CD4-positive, alpha-beta memory T cell (primary cell): ENCODE measurements at regions of chr22 and their contacts with region 1.

Region 1: GRCh38 chr22:42079319-42080251 is at the start of gene SMDT1:
- DNase-seq: peak; percentile 98 to 99 (median 99)
- H3K4me3 ChIP-seq: peak within 1 kb of the TSS; percentile 70 to 78
- H3K4me3 Mint-ChIP-seq: peak within 1 kb of the TSS; percentile 88 to 98 (median 96)
- H3K27ac ChIP-seq: peak within 1 kb of the TSS; percentile 97
- H3K27ac Mint-ChIP-seq: peak within 1 kb of the TSS; percentile 93 to 100 (median 99)
- H3K4me1 ChIP-seq: peaks cover 38% of the 10 kb centered on the region
- H3K4me1 Mint-ChIP-seq: peaks cover 19 to 58% (median 38%) of the 10 kb centered on the region in 4 donors
- H3K27me3 ChIP-seq: no peaks in the 10 kb centered on the region
- H3K27me3 Mint-ChIP-seq: no peaks in the 10 kb centered on the region
- total RNA-seq, gene SMDT1: 101 to 105 TPM

Region 2: GRCh38 chr22:40193429-40194421 is 1885.9 kb before region 1 on chr22:
- CTCF ChIA-PET with region 1: no interaction called
- POLR2A ChIA-PET with region 1: no interaction called
- intact Hi-C with region 1: no loop called
- DNase-seq: no peak
- H3K4me3 ChIP-seq: no peak overlapping the region
- H3K4me3 Mint-ChIP-seq: peak overlapping the region in 5 of 8 donors; percentile 15 to 74 (median 56)
- H3K27ac ChIP-seq: no peak overlapping the region
- H3K27ac Mint-ChIP-seq: peak overlapping the region; percentile 41 to 88 (median 77)
- H3K4me1 ChIP-seq: peaks cover 72% of the 10 kb centered on the region
- H3K4me1 Mint-ChIP-seq: peaks cover 55 to 91% (median 76%) of the 10 kb centered on the region in 4 donors
- H3K27me3 ChIP-seq: no peaks in the 10 kb centered on the region
- H3K27me3 Mint-ChIP-seq: no peaks in the 10 kb centered on the region

Region 3: GRCh38 chr22:41688365-41689211 is 391.0 kb before region 1 on chr22 and contains the start of gene SNU13:
- CTCF ChIA-PET with region 1: no interaction called
- POLR2A ChIA-PET with region 1: interaction called, 13 read pairs
- intact Hi-C with region 1: loop called (anchors 10 kb)
- DNase-seq: peak; percentile 91 to 95 (median 92)
- H3K4me3 ChIP-seq: peak within 1 kb of the TSS; percentile 75 to 96
- H3K4me3 Mint-ChIP-seq: peak within 1 kb of the TSS; percentile 94 to 99 (median 97)
- H3K27ac ChIP-seq: peak within 1 kb of the TSS; percentile 95
- H3K27ac Mint-ChIP-seq: peak within 1 kb of the TSS; percentile 95 to 99 (median 98)
- H3K4me1 ChIP-seq: peaks cover 37% of the 10 kb centered on the region
- H3K4me1 Mint-ChIP-seq: peaks cover 21 to 48% (median 33%) of the 10 kb centered on the region in 4 donors
- H3K27me3 ChIP-seq: no peaks in the 10 kb centered on the region
- H3K27me3 Mint-ChIP-seq: no peaks in the 10 kb centered on the region
- total RNA-seq, gene SNU13: 123 to 129 TPM

Region 4: DNA sequence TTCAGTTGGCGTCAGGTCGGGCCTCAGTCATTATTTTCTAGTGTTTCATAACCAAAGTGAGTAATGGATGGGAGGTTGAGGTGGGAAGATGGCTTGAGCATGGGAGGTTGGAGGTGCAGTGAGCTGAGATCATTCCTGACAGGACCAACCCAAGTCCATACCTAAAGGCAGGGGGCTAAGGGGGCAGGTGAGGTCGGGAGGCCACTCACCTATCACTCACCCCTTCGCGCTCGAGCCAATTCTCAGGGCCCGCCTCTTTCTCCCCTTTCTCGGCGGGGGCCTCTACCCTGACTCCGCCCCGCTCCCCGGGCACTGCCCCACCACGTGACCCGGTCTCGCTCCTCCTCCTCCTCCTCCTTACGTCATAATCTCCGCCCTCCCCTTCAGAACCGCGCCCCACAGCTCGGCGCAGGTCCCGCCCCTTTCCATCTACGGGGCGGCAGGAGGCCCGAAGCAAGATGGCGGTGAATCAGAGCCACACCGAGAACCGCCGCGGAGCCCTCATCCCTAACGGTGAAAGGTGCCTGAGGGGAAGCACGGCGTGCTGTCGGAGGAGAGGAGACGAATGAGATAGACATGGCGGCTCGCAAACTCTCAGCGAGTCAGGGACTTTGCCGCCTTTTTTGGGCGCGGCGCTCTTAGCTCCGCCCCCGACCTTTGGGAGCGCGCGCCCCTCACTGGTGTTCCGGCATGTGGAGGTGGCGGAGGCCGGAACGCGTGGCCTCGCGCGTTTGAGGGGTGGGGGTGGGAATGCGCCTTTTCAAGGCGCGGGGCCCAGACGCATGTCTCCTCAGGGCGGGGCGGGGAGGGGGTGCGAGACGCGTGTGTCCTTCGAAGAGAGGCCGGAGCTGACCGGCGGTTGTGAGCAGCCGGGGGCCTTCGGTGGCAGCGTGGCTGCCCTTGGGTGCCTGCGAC is 81.0 kb before region 1 on chr22 and contains the start of gene WBP2NL:
- CTCF ChIA-PET with region 1: interaction called, 5 read pairs
- POLR2A ChIA-PET with region 1: interaction called, 32 read pairs
- intact Hi-C with region 1: loop called (anchors 2 kb)
- DNase-seq: peak; percentile 90 to 92 (median 92)
- H3K4me3 ChIP-seq: peak within 1 kb of the TSS; percentile 6 to 74
- H3K4me3 Mint-ChIP-seq: peak within 1 kb of the TSS; percentile 93 to 99 (median 98)
- H3K27ac ChIP-seq: peak within 1 kb of the TSS; percentile 61
- H3K27ac Mint-ChIP-seq: peak within 1 kb of the TSS; percentile 67 to 100 (median 98)
- H3K4me1 ChIP-seq: peaks cover 21% of the 10 kb centered on the region
- H3K4me1 Mint-ChIP-seq: peaks cover 13 to 35% (median 19%) of the 10 kb centered on the region in 4 donors
- H3K27me3 ChIP-seq: no peaks in the 10 kb centered on the region
- H3K27me3 Mint-ChIP-seq: no peaks in the 10 kb centered on the region
- total RNA-seq, gene WBP2NL: 3.5 to 5.4 TPM

Region 5: GRCh38 chr22:42127606-42128005 is 48.0 kb after region 1 on chr22:
- CTCF ChIA-PET with region 1: no interaction called
- POLR2A ChIA-PET with region 1: no interaction called
- intact Hi-C with region 1: no loop called
- DNase-seq: no peak
- H3K4me3 ChIP-seq: no peak overlapping the region
- H3K4me3 Mint-ChIP-seq: no peak overlapping the region
- H3K27ac ChIP-seq: no peak overlapping the region
- H3K27ac Mint-ChIP-seq: no peak overlapping the region
- H3K4me1 ChIP-seq: no peaks in the 10 kb centered on the region
- H3K4me1 Mint-ChIP-seq: peaks cover 0 to 2% (median 0%) of the 10 kb centered on the region in 4 donors
- H3K27me3 ChIP-seq: no peaks in the 10 kb centered on the region
- H3K27me3 Mint-ChIP-seq: no peaks in the 10 kb centered on the region